ENCODE measurements at regions of chr11 and their contacts with region 1.

Region 1: GRCh38 chr11:29019960-29020683 is 911.9 kb downstream of the METTL15 start:
- DNase-seq: peak; percentile 73
- ATAC-seq: peak; percentile 52
- H3K4me3 ChIP-seq: no peak overlapping the region
- H3K27ac ChIP-seq: peak overlapping the region; percentile 70
- H3K4me1 ChIP-seq: peaks cover 34% of the 10 kb centered on the region
- H3K27me3 ChIP-seq: no peaks in the 10 kb centered on the region
- CTCF ChIP-seq: peak; percentile 79

Region 2: GRCh38 chr11:28537822-28538221 is 482.3 kb before region 1 on chr11:
- CTCF ChIA-PET with region 1: no interaction called
- POLR2A ChIA-PET with region 1: no interaction called
- intact Hi-C with region 1: loop called (anchors 5 kb)
- DNase-seq: peak; percentile 71
- ATAC-seq: peak; percentile 65
- H3K4me3 ChIP-seq: no peak overlapping the region
- H3K27ac ChIP-seq: peak overlapping the region; percentile 43
- H3K4me1 ChIP-seq: peaks cover 27% of the 10 kb centered on the region
- H3K27me3 ChIP-seq: no peaks in the 10 kb centered on the region
- CTCF ChIP-seq: no peak

Region 3: DNA sequence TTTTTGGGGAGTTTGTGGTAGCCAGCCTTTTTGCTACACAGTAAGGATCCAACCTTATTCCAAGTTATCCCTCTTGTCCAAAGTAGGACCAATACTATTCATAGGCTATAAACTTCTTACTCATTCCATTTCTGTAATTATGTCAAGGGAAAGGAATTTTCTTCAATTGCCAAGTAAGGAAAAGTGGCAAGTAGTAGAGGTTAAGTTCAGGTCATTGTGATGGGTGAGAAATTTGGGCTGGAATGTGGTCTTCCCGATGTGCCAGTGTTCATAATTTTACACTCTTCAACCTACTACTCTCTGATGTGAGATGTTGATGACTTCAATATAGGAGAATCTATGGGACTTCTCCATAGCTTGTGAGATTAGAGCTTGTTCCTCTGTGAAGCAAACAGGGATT is 263.1 kb before region 1 on chr11:
- CTCF ChIA-PET with region 1: interaction called, 7 read pairs
- POLR2A ChIA-PET with region 1: no interaction called
- intact Hi-C with region 1: loop called (anchors 5 kb)
- DNase-seq: peak; percentile 89
- ATAC-seq: peak; percentile 59
- H3K4me3 ChIP-seq: peak overlapping the region; percentile 16; the same call in 1 of the 2 replicates
- H3K27ac ChIP-seq: peak overlapping the region; percentile 79
- H3K4me1 ChIP-seq: peaks cover 66% of the 10 kb centered on the region
- H3K27me3 ChIP-seq: no peaks in the 10 kb centered on the region
- CTCF ChIP-seq: no peak

Region 4: DNA sequence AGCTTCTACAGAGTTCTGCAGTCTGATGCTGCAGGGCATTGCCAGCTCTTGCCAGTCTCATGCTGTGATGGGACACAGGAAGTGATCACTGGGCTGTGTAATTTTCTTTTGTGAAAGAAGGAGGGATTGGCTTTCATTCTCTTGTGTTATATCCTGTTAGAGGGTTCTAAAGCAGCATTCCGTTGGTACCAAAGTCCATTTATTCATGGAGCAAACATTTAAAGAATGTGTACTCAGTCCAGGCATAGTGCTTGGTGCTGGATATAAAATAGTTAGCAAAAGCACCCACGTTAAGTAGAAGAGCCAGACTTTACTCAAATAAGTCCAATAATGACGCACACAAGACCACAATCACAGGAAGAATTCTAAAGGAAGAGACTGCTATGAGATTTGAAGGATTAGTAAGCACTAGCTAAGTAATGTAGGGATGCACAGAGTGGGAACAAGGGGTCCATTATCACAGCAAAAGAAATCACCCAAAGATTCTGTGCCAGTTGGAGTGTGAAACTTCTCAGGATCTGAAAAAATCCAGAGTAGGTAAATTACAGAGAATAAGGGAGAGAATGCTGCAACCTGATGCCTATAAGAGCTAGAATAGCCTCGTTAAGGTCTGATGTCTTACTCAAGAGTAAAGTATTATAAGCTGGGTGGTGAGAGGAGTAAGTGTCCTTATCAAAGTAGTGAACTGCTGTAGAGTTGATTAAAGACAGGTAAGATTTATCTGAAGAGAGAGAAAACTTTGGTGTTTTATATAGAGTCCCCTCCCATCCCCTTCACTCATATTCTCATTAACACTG is 183.6 kb before region 1 on chr11:
- CTCF ChIA-PET with region 1: interaction called, 3 read pairs
- POLR2A ChIA-PET with region 1: no interaction called
- intact Hi-C with region 1: loop called (anchors 10 kb)
- DNase-seq: peak; percentile 90
- ATAC-seq: peak; percentile 74
- H3K4me3 ChIP-seq: peak overlapping the region; percentile 8; the same call in 1 of the 2 replicates
- H3K27ac ChIP-seq: peak overlapping the region; percentile 94
- H3K4me1 ChIP-seq: peaks cover 62% of the 10 kb centered on the region
- H3K27me3 ChIP-seq: no peaks in the 10 kb centered on the region
- CTCF ChIP-seq: no peak

Region 5: GRCh38 chr11:29032384-29033149 is 12.4 kb after region 1 on chr11:
- CTCF ChIA-PET with region 1: no interaction called
- POLR2A ChIA-PET with region 1: no interaction called
- intact Hi-C with region 1: no loop called
- DNase-seq: no peak
- ATAC-seq: no peak
- H3K4me3 ChIP-seq: no peak overlapping the region
- H3K27ac ChIP-seq: no peak overlapping the region
- H3K4me1 ChIP-seq: no peaks in the 10 kb centered on the region
- H3K27me3 ChIP-seq: no peaks in the 10 kb centered on the region
- CTCF ChIP-seq: no peak

Region 6: DNA sequence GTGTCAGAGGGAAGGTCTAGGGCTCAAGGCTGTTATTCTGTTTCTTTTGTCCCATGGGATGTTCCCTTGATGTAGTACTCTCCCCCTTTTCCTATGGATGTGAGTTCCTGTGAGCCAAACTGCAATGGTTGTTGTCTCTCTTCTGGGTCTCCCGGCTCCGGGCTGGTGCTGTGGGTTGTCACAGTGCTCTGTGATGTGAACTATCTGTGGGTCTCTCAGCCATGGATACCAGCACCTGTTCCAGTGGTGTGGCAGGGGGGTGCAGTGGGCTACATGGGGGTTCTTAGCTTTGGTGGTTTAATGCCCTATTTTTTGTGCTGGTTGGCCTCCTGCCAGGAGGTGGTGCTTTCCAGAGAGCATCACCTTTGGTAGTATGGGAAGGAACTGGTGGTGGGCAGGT is 55.6 kb after region 1 on chr11:
- CTCF ChIA-PET with region 1: no interaction called
- POLR2A ChIA-PET with region 1: no interaction called
- intact Hi-C with region 1: no loop called
- DNase-seq: no peak
- ATAC-seq: no peak
- H3K4me3 ChIP-seq: no peak overlapping the region
- H3K27ac ChIP-seq: no peak overlapping the region
- H3K4me1 ChIP-seq: no peaks in the 10 kb centered on the region
- H3K27me3 ChIP-seq: no peaks in the 10 kb centered on the region
- CTCF ChIP-seq: no peak

Region 7: DNA sequence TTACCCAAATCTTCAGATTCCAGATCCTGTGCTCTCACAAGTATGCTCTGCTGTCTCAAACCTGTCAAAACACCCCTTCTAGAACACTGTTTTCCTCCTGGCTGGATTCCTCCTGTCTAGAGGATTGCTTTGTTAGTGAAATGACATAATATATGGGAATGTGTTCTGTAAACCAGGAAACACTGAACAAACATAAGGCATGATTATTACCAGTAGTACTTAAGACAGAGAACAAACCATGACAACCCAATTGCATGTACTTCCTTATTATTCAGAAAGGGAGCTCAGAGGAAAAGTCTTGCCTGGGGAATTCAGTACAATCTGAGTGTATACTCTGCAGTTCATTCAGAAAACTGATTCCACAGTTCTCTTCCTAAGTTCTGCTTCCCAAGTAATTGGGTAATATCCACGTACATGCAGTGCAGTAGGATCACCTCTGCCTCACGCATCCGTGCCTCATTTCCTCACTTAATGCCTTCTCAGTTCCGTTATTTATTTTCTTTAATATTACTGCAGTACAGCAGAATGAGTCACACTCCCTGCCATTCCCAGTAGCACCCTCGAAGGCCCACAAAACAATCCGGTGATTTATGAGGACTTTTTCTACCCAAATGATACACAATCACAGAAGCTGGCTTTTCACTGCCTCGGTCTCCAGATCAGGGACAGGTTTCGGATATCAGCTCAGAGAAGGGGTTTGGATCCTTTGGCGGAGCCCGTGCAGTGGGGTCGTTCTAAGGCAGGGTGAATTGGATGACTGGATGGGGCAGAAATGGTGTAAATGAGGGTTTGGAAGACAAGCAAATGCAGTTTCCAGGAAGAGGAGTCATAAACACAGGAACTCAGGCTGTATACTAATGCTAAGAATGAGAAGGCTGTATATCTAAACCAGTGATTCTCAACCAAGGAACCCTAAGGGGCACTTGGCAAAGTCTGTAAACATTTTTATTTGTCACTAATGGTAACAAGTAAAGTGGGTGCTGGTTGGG is 99.9 kb after region 1 on chr11:
- CTCF ChIA-PET with region 1: no interaction called
- POLR2A ChIA-PET with region 1: no interaction called
- intact Hi-C with region 1: loop called (anchors 1 kb)
- DNase-seq: peak; percentile 63
- ATAC-seq: peak; percentile 84
- H3K4me3 ChIP-seq: 0 out of 2 replicates have a peak overlapping the region, but pooled peaks have one; percentile 27
- H3K27ac ChIP-seq: peak overlapping the region; percentile 81
- H3K4me1 ChIP-seq: peaks cover 18% of the 10 kb centered on the region
- H3K27me3 ChIP-seq: no peaks in the 10 kb centered on the region
- CTCF ChIP-seq: no peak

Region 8: GRCh38 chr11:29159552-29160465 is 139.7 kb after region 1 on chr11:
- CTCF ChIA-PET with region 1: interaction called, 23 read pairs
- POLR2A ChIA-PET with region 1: no interaction called
- intact Hi-C with region 1: loop called (anchors 2 kb)
- DNase-seq: peak; percentile 84
- ATAC-seq: peak; percentile 93
- H3K4me3 ChIP-seq: no peak overlapping the region
- H3K27ac ChIP-seq: no peak overlapping the region
- H3K4me1 ChIP-seq: peaks cover 7% of the 10 kb centered on the region; the same call in 1 of the 2 replicates
- H3K27me3 ChIP-seq: no peaks in the 10 kb centered on the region
- CTCF ChIP-seq: peak; percentile 88

Region 9: GRCh38 chr11:29328961-29329441 is 308.9 kb after region 1 on chr11:
- CTCF ChIA-PET with region 1: no interaction called
- POLR2A ChIA-PET with region 1: no interaction called
- intact Hi-C with region 1: loop called (anchors 5 kb)
- DNase-seq: peak; percentile 77
- ATAC-seq: peak; percentile 88
- H3K4me3 ChIP-seq: no peak overlapping the region
- H3K27ac ChIP-seq: no peak overlapping the region
- H3K4me1 ChIP-seq: peaks cover 27% of the 10 kb centered on the region
- H3K27me3 ChIP-seq: no peaks in the 10 kb centered on the region
- CTCF ChIP-seq: peak; percentile 89